AG04449 (cell line): ENCODE measurements at regions of chr5 and their contacts with region 1.

Region 1: GRCh38 chr5:111158105-111158744 is 66.0 kb upstream of the CAMK4 start:
- DNase-seq: peak; percentile 31
- H3K4me3 ChIP-seq: no peak overlapping the region
- CTCF ChIP-seq: peak; percentile 91

Region 2: GRCh38 chr5:111169269-111169668 is 11.0 kb after region 1 on chr5:
- CTCF ChIA-PET with region 1: interaction called, 20 read pairs
- POLR2A ChIA-PET with region 1: no interaction called
- DNase-seq: no peak
- H3K4me3 ChIP-seq: no peak overlapping the region
- CTCF ChIP-seq: no peak

Region 3: DNA sequence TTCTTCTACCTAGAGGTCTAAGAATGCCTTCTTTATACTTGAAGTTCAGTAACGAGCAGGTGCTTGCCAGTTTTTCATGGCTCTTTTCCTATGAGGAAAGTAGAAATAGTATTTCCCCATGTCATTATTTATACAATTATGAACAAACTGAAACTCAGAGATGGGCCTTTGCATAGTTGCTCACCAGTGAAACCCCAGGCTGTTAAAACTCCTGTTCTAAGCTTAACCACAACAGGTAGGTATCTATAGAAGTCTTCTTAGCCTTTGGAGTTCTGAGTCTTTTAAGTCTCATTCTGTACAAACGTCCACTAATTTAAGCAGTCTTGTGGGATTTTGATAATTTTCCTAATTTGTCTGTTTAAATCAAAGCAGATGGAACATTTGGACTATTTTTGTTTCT is 264.0 kb after region 1 on chr5:
- CTCF ChIA-PET with region 1: no interaction called
- POLR2A ChIA-PET with region 1: no interaction called
- DNase-seq: no peak
- H3K4me3 ChIP-seq: no peak overlapping the region
- CTCF ChIP-seq: no peak

Region 4: GRCh38 chr5:111439473-111440075 is 281.3 kb after region 1 on chr5:
- CTCF ChIA-PET with region 1: no interaction called
- POLR2A ChIA-PET with region 1: no interaction called
- DNase-seq: no peak
- H3K4me3 ChIP-seq: no peak overlapping the region
- CTCF ChIP-seq: no peak

Region 5: GRCh38 chr5:111461255-111461671 is 303.0 kb after region 1 on chr5:
- CTCF ChIA-PET with region 1: interaction called, 21 read pairs
- POLR2A ChIA-PET with region 1: no interaction called
- DNase-seq: no peak
- H3K4me3 ChIP-seq: no peak overlapping the region
- CTCF ChIP-seq: peak; percentile 63

Region 6: GRCh38 chr5:111478266-111478665 is 320.0 kb after region 1 on chr5:
- CTCF ChIA-PET with region 1: interaction called, 50 read pairs
- POLR2A ChIA-PET with region 1: no interaction called
- DNase-seq: no peak
- H3K4me3 ChIP-seq: no peak overlapping the region
- CTCF ChIP-seq: no peak

Region 7: GRCh38 chr5:112116371-112116770 is 958.1 kb after region 1 on chr5:
- CTCF ChIA-PET with region 1: no interaction called
- POLR2A ChIA-PET with region 1: no interaction called
- DNase-seq: no peak
- H3K4me3 ChIP-seq: no peak overlapping the region
- CTCF ChIP-seq: no peak

Region 8: DNA sequence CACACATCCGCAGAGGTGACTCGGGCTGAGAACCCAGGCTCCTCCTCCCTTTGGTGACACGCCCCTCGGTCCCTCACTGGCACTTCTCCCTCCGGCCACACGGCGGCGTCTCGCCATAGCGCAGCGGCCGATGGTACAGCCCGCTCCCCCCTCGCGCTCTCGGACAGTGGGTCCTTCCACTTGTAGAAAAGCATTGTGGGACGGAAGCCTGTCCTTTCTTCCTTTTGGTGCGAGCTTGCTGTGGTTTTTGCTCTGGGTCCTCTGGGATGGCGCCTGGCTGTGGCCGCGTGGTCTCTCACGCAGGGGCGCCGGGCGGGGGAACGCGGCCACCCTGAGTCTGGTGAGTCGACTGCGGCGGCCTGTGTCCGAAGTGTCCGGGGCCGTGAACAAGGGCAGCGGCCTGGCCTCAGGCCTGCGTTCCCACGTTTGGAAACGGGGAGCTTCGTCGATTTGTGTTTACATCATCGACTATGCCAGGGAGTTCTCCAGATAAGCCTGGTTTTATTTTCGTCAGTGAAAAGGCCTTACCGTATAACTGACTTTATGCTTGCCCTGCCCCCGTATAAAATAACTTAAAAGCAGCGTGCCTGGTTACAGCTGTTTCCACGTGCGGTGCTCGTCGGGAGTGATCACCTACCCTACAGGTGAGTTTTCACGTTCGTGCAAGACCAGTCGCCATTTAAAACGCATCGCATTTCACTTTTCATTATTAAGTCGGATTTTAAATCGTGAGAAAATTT is 1002.6 kb after region 1 on chr5:
- CTCF ChIA-PET with region 1: interaction called, 11 read pairs
- POLR2A ChIA-PET with region 1: no interaction called
- DNase-seq: peak; percentile 40
- H3K4me3 ChIP-seq: peak overlapping the region; percentile 95
- CTCF ChIP-seq: peak; percentile 100